Endothelial cell of umbilical vein (primary cell): ENCODE measurements at regions of chr1 and their contacts with region 1.

Region 1: DNA sequence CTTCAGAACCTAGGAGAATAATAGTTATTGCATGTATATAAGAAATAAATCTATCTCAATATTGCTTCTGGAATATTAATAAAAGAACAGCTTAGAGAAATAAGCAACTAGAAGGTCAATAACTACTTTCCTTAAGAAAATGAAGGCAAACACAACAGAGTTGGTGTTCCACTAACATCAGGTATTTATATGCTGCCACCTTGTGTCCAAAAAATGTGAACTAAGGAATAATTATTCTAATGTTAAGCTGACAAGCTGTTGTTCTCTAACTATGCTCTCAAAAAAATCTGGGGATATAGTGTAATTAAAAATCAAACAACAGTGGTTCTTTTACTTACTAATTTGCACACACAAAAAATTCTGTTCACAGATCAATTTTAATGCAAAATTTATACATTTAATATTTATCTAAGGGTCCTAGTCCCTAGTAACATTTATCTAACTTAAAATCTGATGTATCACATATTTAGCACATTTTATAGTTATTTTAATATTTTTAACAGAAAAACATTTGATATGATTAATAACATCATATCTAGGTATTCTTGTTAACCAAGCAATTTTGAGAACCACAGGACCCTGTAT is 39.6 kb downstream of the UCHL5 start:
- DNase-seq: peak; percentile 76
- H3K4me3 ChIP-seq: no peak overlapping the region
- H3K27ac ChIP-seq: no peak overlapping the region
- H3K4me1 ChIP-seq: peaks cover 4% of the 10 kb centered on the region
- H3K27me3 ChIP-seq: no peaks in the 10 kb centered on the region
- CTCF ChIP-seq: peak; percentile 12 to 19
- POLR2A ChIP-seq: no peak

Region 2: GRCh38 chr1:192609110-192610079 is 410.1 kb before region 1 on chr1:
- CTCF ChIA-PET with region 1: interaction called, 24 read pairs
- POLR2A ChIA-PET with region 1: no interaction called
- dilution Hi-C with region 1: no loop called
- intact Hi-C with region 1: loop called (anchors 2 kb)
- DNase-seq: no peak
- H3K4me3 ChIP-seq: no peak overlapping the region
- H3K27ac ChIP-seq: no peak overlapping the region
- H3K4me1 ChIP-seq: no peaks in the 10 kb centered on the region
- H3K27me3 ChIP-seq: no peaks in the 10 kb centered on the region
- CTCF ChIP-seq: no peak
- POLR2A ChIP-seq: no peak

Region 3: GRCh38 chr1:192861860-192862259 is 157.7 kb before region 1 on chr1:
- CTCF ChIA-PET with region 1: interaction called, 12 read pairs
- POLR2A ChIA-PET with region 1: no interaction called
- dilution Hi-C with region 1: no loop called
- intact Hi-C with region 1: no loop called
- DNase-seq: peak; percentile 16
- H3K4me3 ChIP-seq: no peak overlapping the region
- H3K27ac ChIP-seq: no peak overlapping the region
- H3K4me1 ChIP-seq: no peaks in the 10 kb centered on the region
- H3K27me3 ChIP-seq: no peaks in the 10 kb centered on the region
- CTCF ChIP-seq: no peak
- POLR2A ChIP-seq: no peak

Region 4: GRCh38 chr1:192967901-192968300 is 51.6 kb before region 1 on chr1:
- CTCF ChIA-PET with region 1: interaction called, 11 read pairs
- POLR2A ChIA-PET with region 1: no interaction called
- dilution Hi-C with region 1: no loop called
- intact Hi-C with region 1: no loop called
- DNase-seq: peak; percentile 51
- H3K4me3 ChIP-seq: peak overlapping the region in 1 of 3 experiments; percentile 22
- H3K27ac ChIP-seq: peak overlapping the region; percentile 93
- H3K4me1 ChIP-seq: peaks cover 25% of the 10 kb centered on the region
- H3K27me3 ChIP-seq: no peaks in the 10 kb centered on the region
- CTCF ChIP-seq: no peak
- POLR2A ChIP-seq: no peak

Region 5: DNA sequence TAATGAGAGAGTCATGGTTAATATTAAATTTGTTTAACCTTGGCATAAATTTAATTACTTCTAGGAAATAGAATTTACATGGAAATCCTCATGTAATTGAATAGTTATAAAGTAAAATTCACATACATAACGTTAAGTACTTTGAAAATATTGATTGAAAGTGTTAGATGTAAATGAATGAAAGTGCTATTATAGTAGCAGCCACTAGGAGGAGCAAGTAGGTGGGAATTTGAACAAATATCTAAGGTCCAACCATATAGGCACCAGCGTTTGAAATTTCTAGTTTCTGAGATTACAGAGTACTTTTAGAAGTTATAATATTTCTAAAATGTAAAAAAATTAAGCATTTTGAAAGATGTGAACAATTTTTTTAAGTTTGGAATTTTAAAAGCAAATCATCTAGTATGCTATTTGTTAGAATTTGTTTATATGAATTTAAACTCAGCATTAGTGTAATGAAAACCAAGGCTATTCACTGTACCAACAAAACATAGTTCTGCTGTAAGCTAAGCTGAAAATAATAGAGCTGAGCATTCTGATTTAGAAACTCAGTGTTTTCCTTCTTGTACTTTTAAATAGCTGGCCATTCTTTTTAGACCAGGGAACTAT is 163.6 kb after region 1 on chr1:
- CTCF ChIA-PET with region 1: no interaction called
- POLR2A ChIA-PET with region 1: no interaction called
- dilution Hi-C with region 1: no loop called
- intact Hi-C with region 1: no loop called
- DNase-seq: peak; percentile 73
- H3K4me3 ChIP-seq: no peak overlapping the region
- H3K27ac ChIP-seq: no peak overlapping the region
- H3K4me1 ChIP-seq: no peaks in the 10 kb centered on the region
- H3K27me3 ChIP-seq: no peaks in the 10 kb centered on the region
- CTCF ChIP-seq: peak; percentile 42 to 43
- POLR2A ChIP-seq: no peak

Region 6: DNA sequence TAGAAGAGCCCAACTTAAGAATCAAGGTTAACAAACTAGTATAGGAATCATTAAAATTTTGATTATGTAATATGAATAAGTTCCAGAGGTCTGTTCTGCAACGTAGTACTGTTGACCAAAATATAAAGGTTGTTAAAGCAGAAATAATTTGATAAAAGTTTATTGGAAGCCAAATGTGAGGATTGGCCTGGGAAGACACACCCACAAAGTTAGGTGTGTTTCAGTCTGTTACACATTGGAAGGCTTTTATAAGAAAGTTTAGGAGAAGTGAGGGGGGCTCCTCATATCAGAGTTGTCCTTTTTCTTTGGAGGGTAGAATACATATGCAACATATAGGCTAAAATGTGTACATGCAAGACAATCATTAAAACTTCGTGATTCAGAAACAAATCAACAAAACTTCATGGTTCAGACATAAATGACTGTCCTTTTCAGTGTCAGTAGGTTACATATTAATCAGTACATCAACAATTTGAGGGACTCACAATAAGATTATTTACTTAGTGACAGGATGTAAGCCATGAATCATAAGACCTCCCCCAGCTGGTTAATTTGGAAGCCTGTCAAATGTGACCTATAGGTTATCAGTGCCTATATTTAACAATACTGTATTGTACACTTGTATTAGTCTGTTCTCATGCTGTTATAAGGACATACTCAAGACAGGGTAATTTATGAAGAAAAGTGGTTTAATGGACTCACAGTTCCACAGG is 411.9 kb after region 1 on chr1:
- CTCF ChIA-PET with region 1: no interaction called
- POLR2A ChIA-PET with region 1: no interaction called
- dilution Hi-C with region 1: no loop called
- intact Hi-C with region 1: no loop called
- DNase-seq: peak; percentile 74
- H3K4me3 ChIP-seq: no peak overlapping the region
- H3K27ac ChIP-seq: no peak overlapping the region
- H3K4me1 ChIP-seq: peaks cover 10% of the 10 kb centered on the region
- H3K27me3 ChIP-seq: no peaks in the 10 kb centered on the region
- CTCF ChIP-seq: no peak
- POLR2A ChIP-seq: no peak